ENCODE measurements at regions of chr5 and their contacts with region 1.

Region 1: GRCh38 chr5:1140171-1140817 is 28.4 kb upstream of the SLC12A7 start:
- DNase-seq: peak; percentile 63
- ATAC-seq: peak; percentile 84
- H3K4me3 Mint-ChIP-seq: peak overlapping the region; percentile 55
- H3K27ac Mint-ChIP-seq: no peak overlapping the region
- H3K4me1 Mint-ChIP-seq: peaks cover 29% of the 10 kb centered on the region
- H3K27me3 Mint-ChIP-seq: peaks cover 5% of the 10 kb centered on the region
- CTCF ChIP-seq: no peak

Region 2: GRCh38 chr5:671459-672328 is 468.6 kb before region 1 on chr5:
- CTCF ChIA-PET with region 1: no interaction called
- POLR2A ChIA-PET with region 1: no interaction called
- intact Hi-C with region 1: loop called (anchors 5 kb)
- DNase-seq: peak; percentile 50
- ATAC-seq: peak; percentile 84
- H3K4me3 Mint-ChIP-seq: no peak overlapping the region
- H3K27ac Mint-ChIP-seq: no peak overlapping the region
- H3K4me1 Mint-ChIP-seq: peaks cover 13% of the 10 kb centered on the region
- H3K27me3 Mint-ChIP-seq: peaks cover 8% of the 10 kb centered on the region
- CTCF ChIP-seq: no peak

Region 3: DNA sequence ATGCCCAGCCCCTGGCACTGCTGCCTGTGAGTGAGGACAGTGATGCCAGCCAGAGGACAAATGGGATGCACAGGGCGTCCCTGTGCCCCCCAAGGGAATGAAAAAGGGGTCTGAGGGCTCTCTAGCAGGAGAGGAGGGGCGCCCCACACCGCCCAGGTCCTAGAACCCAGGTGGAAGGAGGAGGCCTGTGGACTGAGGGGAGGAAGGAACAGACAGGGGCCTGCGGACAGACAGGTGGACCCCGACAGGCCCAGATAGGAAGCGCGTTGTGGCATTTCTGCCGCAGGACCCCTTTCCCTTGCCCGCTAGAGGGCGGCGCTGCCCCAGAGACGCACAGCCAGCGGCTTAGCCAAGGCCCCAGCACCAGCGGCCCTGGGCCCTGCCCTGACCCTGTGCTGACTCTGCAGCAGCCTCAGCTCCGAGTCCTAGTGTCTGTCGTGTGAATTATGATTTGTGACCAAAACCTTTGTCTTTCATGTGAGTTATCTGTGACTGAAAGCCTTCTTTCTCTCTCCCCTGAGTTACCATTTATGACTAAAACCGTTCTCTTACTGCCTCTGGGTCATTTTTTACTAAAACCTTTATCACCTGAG is 216.9 kb before region 1 on chr5:
- CTCF ChIA-PET with region 1: interaction called, 16 read pairs
- POLR2A ChIA-PET with region 1: no interaction called
- intact Hi-C with region 1: loop called (anchors 1 kb)
- DNase-seq: peak; percentile 65
- ATAC-seq: peak; percentile 89
- H3K4me3 Mint-ChIP-seq: no peak overlapping the region
- H3K27ac Mint-ChIP-seq: no peak overlapping the region
- H3K4me1 Mint-ChIP-seq: no peaks in the 10 kb centered on the region
- H3K27me3 Mint-ChIP-seq: peaks cover 18% of the 10 kb centered on the region
- CTCF ChIP-seq: peak; percentile 59

Region 4: DNA sequence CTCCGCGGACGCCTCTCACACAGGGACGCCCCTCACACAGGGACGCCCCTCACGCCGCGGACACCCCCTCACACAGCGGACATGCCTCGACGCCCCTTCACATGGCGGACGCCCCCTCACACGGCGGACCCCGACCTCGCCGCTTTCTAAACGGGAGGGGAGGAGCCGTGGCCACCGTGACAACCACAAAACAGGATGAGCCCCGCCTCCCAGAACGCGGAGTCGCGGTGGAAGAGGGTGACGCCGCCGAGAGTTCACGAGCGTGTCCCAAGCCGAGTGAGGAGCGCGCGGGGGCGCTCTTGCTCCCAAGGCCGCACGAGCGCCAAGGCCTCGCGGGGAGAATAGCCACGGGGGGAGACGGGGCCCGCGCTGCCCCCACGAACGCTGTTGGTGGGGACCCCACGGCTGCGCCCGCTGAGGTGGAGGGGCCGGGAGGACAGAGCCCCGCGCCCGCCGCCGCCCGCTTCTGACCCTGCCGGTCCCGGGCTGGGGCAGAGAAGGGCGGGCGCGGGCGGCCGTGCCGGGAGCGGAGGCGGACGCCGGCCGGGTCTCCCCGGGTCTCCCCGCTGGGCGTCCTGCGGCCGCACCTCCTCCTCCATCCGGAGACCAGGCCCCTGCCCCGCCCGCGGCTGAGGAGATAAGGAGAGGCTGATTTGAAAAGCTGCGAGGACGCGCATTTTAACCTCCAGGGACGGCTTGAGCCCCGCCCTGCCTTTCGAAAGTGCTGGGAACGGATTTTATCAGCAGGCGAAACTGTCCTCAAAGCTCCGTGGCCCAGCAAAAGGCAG is 135.6 kb before region 1 on chr5:
- CTCF ChIA-PET with region 1: no interaction called
- POLR2A ChIA-PET with region 1: no interaction called
- intact Hi-C with region 1: loop called (anchors 1 kb)
- DNase-seq: peak; percentile 31
- ATAC-seq: peak; percentile 45
- H3K4me3 Mint-ChIP-seq: peak overlapping the region; percentile 71
- H3K27ac Mint-ChIP-seq: no peak overlapping the region
- H3K4me1 Mint-ChIP-seq: peaks cover 15% of the 10 kb centered on the region
- H3K27me3 Mint-ChIP-seq: peaks cover 38% of the 10 kb centered on the region
- CTCF ChIP-seq: no peak

Region 5: GRCh38 chr5:1011226-1011631 is 129.1 kb before region 1 on chr5:
- CTCF ChIA-PET with region 1: interaction called, 10 read pairs
- POLR2A ChIA-PET with region 1: no interaction called
- intact Hi-C with region 1: loop called (anchors 1 kb)
- DNase-seq: no peak
- ATAC-seq: no peak
- H3K4me3 Mint-ChIP-seq: peak overlapping the region; percentile 32
- H3K27ac Mint-ChIP-seq: no peak overlapping the region
- H3K4me1 Mint-ChIP-seq: peaks cover 9% of the 10 kb centered on the region
- H3K27me3 Mint-ChIP-seq: peaks cover 41% of the 10 kb centered on the region
- CTCF ChIP-seq: no peak

Region 6: DNA sequence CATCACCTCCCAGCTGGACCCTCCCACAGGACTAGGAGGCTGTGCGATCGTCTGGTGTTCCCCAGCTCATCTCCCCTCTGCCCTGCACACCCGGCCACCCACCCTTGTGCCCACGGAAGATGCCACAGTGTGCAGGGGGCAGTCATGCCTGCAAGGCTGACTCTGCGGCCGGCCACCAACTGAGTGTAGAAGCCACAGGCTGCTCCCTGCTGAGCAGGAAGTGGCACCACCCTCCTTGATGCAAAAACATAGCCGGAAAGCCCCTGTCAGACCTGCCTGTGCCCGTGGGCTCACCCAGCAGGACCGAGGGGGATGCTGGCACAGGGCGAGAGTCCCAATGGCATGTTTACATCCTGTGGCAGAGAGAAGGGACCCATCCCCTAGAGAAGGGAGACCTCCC is 11.9 kb after region 1 on chr5:
- CTCF ChIA-PET with region 1: interaction called, 11 read pairs
- POLR2A ChIA-PET with region 1: interaction called, 3 read pairs
- intact Hi-C with region 1: loop called (anchors 2 kb)
- DNase-seq: peak; percentile 37
- ATAC-seq: peak; percentile 87
- H3K4me3 Mint-ChIP-seq: peak overlapping the region; percentile 63
- H3K27ac Mint-ChIP-seq: peak overlapping the region; percentile 80
- H3K4me1 Mint-ChIP-seq: peaks cover 45% of the 10 kb centered on the region
- H3K27me3 Mint-ChIP-seq: peaks cover 18% of the 10 kb centered on the region
- CTCF ChIP-seq: no peak

Region 7: DNA sequence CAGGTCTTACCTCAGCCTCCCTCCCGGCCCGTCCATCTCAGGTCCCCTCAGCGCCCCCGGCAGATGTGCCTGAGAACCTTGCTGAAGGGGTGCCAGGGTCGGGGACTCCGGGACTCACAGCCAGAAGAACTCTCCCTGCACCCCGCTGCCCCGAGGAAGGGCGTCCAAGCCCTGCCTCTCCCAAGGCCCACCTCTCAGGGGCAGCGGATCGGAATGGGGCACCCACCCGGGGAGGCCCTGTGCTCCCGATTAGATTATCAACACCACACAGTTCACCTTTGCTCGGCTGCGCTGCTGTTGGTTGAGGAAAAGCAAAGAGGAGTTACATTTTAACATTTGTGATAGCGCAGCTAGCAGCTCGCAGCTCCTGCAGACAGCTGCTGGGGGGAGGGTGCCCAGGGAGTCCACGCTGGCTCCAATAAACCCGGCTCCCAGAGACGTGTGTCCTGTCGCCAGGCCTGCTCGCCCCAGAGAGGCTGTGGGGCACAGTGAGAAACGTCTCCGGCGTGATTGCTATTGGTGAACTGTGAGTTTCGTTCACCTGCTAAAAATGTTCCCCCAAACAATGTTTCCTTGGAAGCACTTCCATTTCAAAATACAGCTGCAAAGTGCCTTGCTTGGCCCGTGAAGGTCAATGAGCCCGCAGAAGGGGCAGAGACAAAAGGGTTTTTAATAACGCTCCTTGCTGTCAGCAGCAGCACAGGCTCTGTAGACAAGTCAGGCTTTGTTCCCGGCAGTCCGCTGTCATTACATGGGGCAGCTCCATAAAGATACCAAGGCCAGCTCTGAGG is 42.5 kb after region 1 on chr5:
- CTCF ChIA-PET with region 1: no interaction called
- POLR2A ChIA-PET with region 1: no interaction called
- intact Hi-C with region 1: no loop called
- DNase-seq: no peak
- ATAC-seq: no peak
- H3K4me3 Mint-ChIP-seq: no peak overlapping the region
- H3K27ac Mint-ChIP-seq: no peak overlapping the region
- H3K4me1 Mint-ChIP-seq: no peaks in the 10 kb centered on the region
- H3K27me3 Mint-ChIP-seq: peaks cover under 1% of the 10 kb centered on the region
- CTCF ChIP-seq: no peak

Region 8: GRCh38 chr5:1414236-1415058 is 274.2 kb after region 1 on chr5:
- CTCF ChIA-PET with region 1: no interaction called
- POLR2A ChIA-PET with region 1: no interaction called
- intact Hi-C with region 1: no loop called
- DNase-seq: no peak
- ATAC-seq: no peak
- H3K4me3 Mint-ChIP-seq: no peak overlapping the region
- H3K27ac Mint-ChIP-seq: no peak overlapping the region
- H3K4me1 Mint-ChIP-seq: peaks cover 5% of the 10 kb centered on the region
- H3K27me3 Mint-ChIP-seq: peaks cover 6% of the 10 kb centered on the region
- CTCF ChIP-seq: no peak

Measured in activated B cell treated with CpG ODN at 0.5 μM for 24 hours (primary cell).